Caco-2 (cell line): ENCODE measurements at regions of chr2 and their contacts with region 1.

Region 1: DNA sequence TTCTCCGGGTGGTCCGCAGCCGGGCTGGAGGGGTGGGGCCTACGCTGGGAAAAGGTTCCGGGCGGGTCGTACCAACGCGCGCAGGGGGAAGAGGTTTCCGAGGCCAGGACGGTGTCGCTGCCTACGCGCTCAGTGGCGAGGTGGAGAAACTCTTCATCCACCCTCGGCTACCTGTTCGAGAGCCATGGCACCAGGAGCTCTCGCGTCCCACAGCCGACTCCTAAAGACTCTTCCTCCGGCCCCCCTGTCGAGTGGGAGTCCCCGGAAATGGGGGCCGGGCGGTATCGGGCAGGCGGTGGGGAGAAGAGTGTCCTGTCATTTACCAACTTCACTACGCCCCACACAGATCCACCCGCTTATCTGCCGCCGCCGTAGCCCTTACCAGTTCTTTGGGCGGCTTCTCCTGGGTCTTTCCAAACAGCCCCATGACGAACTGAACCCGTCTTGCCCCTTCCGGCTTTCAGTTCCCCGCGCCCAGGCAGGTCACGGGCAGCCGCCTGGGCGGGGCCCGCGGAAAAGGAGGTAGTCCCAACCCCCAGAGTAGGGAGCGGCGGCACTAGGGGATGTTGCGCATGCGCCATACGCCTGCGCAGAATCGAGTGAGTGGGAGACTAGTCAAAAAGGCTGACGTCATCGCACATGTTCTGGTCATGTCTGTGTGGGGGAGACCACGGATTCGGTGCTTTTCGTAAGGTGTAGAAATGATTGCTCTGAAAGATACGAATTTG is at the start of gene CHMP3:
- DNase-seq: peak; percentile 98
- H3K4me3 ChIP-seq: peak within 1 kb of the TSS; percentile 81
- H3K4me3 Mint-ChIP-seq: peak within 1 kb of the TSS; percentile 97
- H3K27ac Mint-ChIP-seq: peak within 1 kb of the TSS; percentile 98
- H3K4me1 ChIP-seq: peaks cover 13% of the 10 kb centered on the region
- H3K4me1 Mint-ChIP-seq: peaks cover 16% of the 10 kb centered on the region
- H3K27me3 ChIP-seq: no peaks in the 10 kb centered on the region
- H3K27me3 Mint-ChIP-seq: no peaks in the 10 kb centered on the region
- CTCF ChIP-seq: no peak
- total RNA-seq, gene CHMP3: 93.3 and 93.5 TPM in 2 replicates

Region 2: GRCh38 chr2:86661333-86661732 is 98.2 kb after region 1 on chr2:
- CTCF ChIA-PET with region 1: no interaction called
- POLR2A ChIA-PET with region 1: no interaction called
- intact Hi-C with region 1: no loop called
- DNase-seq: no peak
- H3K4me3 ChIP-seq: no peak overlapping the region
- H3K4me3 Mint-ChIP-seq: no peak overlapping the region
- H3K27ac Mint-ChIP-seq: no peak overlapping the region
- H3K4me1 ChIP-seq: no peaks in the 10 kb centered on the region
- H3K4me1 Mint-ChIP-seq: no peaks in the 10 kb centered on the region
- H3K27me3 ChIP-seq: no peaks in the 10 kb centered on the region
- H3K27me3 Mint-ChIP-seq: no peaks in the 10 kb centered on the region
- CTCF ChIP-seq: no peak

Region 3: DNA sequence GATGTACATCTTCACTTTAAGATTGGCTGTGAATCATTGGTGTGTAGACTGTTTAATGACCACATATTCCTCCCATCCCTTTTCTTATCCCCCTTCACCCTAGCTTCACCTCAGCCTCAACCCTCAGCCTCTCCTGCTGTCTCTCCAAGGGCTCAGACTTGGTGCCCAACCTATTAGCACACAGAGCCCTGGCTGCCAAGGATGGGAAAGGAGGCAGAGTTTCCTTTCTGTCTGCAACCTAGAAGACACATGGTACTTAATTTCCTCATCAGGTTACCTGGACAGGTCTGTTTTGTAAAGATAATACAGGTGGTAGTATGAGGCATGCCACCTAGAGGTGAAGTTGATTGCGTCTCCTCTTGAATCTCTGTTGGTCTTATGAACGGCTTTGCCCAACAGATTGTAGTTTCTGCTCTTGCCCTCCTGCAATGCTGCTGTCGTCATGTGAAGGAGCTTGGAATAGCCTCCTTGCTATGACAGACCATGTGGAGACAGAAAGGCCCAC is 112.5 kb after region 1 on chr2:
- CTCF ChIA-PET with region 1: no interaction called
- POLR2A ChIA-PET with region 1: no interaction called
- intact Hi-C with region 1: loop called (anchors 5 kb)
- DNase-seq: peak; percentile 42 to 44
- H3K4me3 ChIP-seq: no peak overlapping the region
- H3K4me3 Mint-ChIP-seq: no peak overlapping the region
- H3K27ac Mint-ChIP-seq: no peak overlapping the region
- H3K4me1 ChIP-seq: peaks cover 19% of the 10 kb centered on the region
- H3K4me1 Mint-ChIP-seq: peaks cover 19% of the 10 kb centered on the region
- H3K27me3 ChIP-seq: no peaks in the 10 kb centered on the region
- H3K27me3 Mint-ChIP-seq: no peaks in the 10 kb centered on the region
- CTCF ChIP-seq: peak; percentile 42 to 65